ENCODE measurements at regions of chr6 and their contacts with region 1.

Region 1: GRCh38 chr6:150967910-150968309 is 102.4 kb downstream of the MTHFD1L start:
- DNase-seq: no peak
- ATAC-seq: no peak
- H3K4me3 ChIP-seq: no peak overlapping the region
- H3K4me3 Mint-ChIP-seq: no peak overlapping the region
- H3K27ac ChIP-seq: no peak overlapping the region
- H3K27ac Mint-ChIP-seq: no peak overlapping the region
- H3K4me1 ChIP-seq: no peaks in the 10 kb centered on the region
- H3K4me1 Mint-ChIP-seq: no peaks in the 10 kb centered on the region
- H3K27me3 ChIP-seq: no peaks in the 10 kb centered on the region
- H3K27me3 Mint-ChIP-seq: no peaks in the 10 kb centered on the region

Region 2: DNA sequence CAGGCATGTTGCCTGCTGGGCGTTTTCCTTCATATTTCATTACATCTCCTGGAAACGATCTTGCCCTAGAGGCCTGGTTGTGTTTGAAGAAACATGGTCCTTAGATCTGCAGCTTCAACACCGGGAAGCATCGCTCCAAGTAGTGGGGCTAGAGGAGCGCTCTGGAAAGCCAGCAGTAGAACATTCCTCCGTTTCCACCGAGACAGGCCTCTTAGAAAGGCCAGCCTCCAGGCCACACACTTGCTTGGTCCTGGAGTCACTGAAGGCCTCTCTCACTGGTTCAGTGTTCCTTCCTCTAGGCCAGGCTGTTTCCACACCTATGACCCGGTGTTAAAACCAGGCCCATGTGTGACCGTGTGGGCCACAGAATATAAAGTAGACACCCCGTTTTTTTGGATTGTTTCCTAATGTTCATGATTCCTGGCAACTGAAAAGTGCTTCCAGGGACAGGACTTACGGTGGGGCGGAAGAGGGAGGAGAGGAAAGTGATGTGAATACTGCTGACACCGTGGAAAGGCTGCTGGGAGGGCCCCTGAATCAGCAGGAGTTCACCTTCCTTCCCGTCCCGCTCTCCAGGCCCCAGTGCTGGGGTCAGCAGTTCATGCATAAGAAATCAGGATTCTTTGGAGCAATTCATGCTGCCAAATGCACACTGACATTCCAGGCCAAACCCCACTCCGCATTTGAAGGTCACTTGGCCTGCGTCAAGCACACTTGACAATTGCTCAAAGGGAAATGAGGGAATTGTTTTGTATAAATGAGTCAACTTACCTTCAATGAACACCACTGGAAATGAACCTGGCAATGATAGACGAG is 515.3 kb before region 1 on chr6:
- CTCF ChIA-PET with region 1: no interaction called
- POLR2A ChIA-PET with region 1: no interaction called
- intact Hi-C with region 1: no loop called
- DNase-seq: no peak
- ATAC-seq: no peak
- H3K4me3 ChIP-seq: no peak overlapping the region
- H3K4me3 Mint-ChIP-seq: no peak overlapping the region
- H3K27ac ChIP-seq: no peak overlapping the region
- H3K27ac Mint-ChIP-seq: no peak overlapping the region
- H3K4me1 ChIP-seq: no peaks in the 10 kb centered on the region
- H3K4me1 Mint-ChIP-seq: no peaks in the 10 kb centered on the region
- H3K27me3 ChIP-seq: no peaks in the 10 kb centered on the region
- H3K27me3 Mint-ChIP-seq: peaks cover 0 to 9% (median 0%) of the 10 kb centered on the region in 5 donors

Region 3: DNA sequence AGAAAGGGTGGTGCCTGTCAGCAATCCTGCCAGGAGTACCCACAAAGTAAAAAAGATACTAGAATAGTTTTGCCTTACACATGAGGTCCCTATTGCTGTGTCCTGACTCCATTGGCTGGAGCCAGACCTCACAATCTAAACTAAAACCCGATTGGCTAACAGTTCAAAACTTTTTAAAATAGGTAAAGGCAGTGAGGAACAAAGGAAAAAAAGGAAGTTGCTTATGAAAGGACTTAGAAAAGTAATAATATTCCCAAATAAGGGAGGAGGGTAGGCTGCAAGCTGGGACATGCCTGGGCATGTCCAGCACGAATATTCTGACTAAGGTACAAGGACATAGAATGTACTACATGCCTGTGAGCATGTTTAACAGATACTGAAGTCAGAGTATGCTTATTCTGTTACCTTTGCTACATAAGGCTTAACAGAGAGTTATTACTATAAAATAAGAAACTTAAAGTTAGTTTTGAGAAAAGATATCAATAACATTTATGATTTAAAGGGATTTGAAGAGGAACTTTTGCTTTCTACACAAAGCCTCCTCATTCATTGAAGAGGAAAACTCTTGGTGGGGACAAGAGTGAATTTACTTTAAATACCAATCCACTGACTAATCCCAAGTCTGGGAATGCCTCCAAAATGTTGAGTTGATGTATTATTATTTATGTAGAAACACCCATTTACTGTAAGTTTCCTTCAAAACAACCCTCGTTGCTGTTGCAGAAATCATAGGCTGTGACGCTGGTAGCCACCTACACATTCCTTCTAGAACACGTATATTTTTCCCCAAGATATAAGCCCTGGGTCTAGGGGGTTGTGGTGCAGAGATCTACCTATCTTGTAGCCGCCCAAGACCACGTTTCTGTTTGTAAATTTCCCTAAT is 110.6 kb before region 1 on chr6:
- CTCF ChIA-PET with region 1: no interaction called
- POLR2A ChIA-PET with region 1: no interaction called
- intact Hi-C with region 1: no loop called
- DNase-seq: no peak
- ATAC-seq: no peak
- H3K4me3 ChIP-seq: no peak overlapping the region
- H3K4me3 Mint-ChIP-seq: no peak overlapping the region
- H3K27ac ChIP-seq: no peak overlapping the region
- H3K27ac Mint-ChIP-seq: no peak overlapping the region
- H3K4me1 ChIP-seq: no peaks in the 10 kb centered on the region
- H3K4me1 Mint-ChIP-seq: peaks cover 0 to 17% (median 0%) of the 10 kb centered on the region in 7 donors
- H3K27me3 ChIP-seq: no peaks in the 10 kb centered on the region
- H3K27me3 Mint-ChIP-seq: peaks cover 11 to 35% (median 19%) of the 10 kb centered on the region in 5 donors

Region 4: GRCh38 chr6:151060096-151060765 is 92.3 kb after region 1 on chr6:
- CTCF ChIA-PET with region 1: no interaction called
- POLR2A ChIA-PET with region 1: no interaction called
- intact Hi-C with region 1: loop called in 1 of 2 experiments (anchors 5 kb)
- DNase-seq: no peak
- ATAC-seq: peak; percentile 18
- H3K4me3 ChIP-seq: no peak overlapping the region
- H3K4me3 Mint-ChIP-seq: no peak overlapping the region
- H3K27ac ChIP-seq: no peak overlapping the region
- H3K27ac Mint-ChIP-seq: no peak overlapping the region
- H3K4me1 ChIP-seq: no peaks in the 10 kb centered on the region
- H3K4me1 Mint-ChIP-seq: no peaks in the 10 kb centered on the region
- H3K27me3 ChIP-seq: no peaks in the 10 kb centered on the region
- H3K27me3 Mint-ChIP-seq: no peaks in the 10 kb centered on the region

Region 5: GRCh38 chr6:151224076-151224475 is 256.2 kb after region 1 on chr6:
- CTCF ChIA-PET with region 1: no interaction called
- POLR2A ChIA-PET with region 1: no interaction called
- intact Hi-C with region 1: no loop called
- DNase-seq: no peak
- ATAC-seq: no peak
- H3K4me3 ChIP-seq: no peak overlapping the region
- H3K4me3 Mint-ChIP-seq: no peak overlapping the region
- H3K27ac ChIP-seq: no peak overlapping the region
- H3K27ac Mint-ChIP-seq: no peak overlapping the region
- H3K4me1 ChIP-seq: no peaks in the 10 kb centered on the region
- H3K4me1 Mint-ChIP-seq: no peaks in the 10 kb centered on the region
- H3K27me3 ChIP-seq: no peaks in the 10 kb centered on the region
- H3K27me3 Mint-ChIP-seq: peaks cover 0 to 3% (median 0%) of the 10 kb centered on the region in 5 donors